Activated T-helper 1 cell treated with anti-CD3 and anti-CD28 coated beads, Interleukin-12 subunit alpha, Interleukin-12 subunit beta, Interleukin-2, Interleukin-4 antibody, amounts not matched to agents 30 ng/mL and 10 ng/mL and 1 ng/mL, durations not matched to agents 14 hours and 24 hours and 36 hours (primary cell): ENCODE measurements at regions of chr13 and their contacts with region 1.

Region 1: GRCh38 chr13:43797869-43798268 is 11.1 kb upstream of the ENOX1 start:
- DNase-seq: no peak
- H3K4me3 Mint-ChIP-seq: no peak overlapping the region
- H3K27ac Mint-ChIP-seq: no peak overlapping the region
- H3K4me1 Mint-ChIP-seq: peaks cover 14% of the 10 kb centered on the region
- H3K27me3 Mint-ChIP-seq: peaks cover 12% of the 10 kb centered on the region

Region 2: DNA sequence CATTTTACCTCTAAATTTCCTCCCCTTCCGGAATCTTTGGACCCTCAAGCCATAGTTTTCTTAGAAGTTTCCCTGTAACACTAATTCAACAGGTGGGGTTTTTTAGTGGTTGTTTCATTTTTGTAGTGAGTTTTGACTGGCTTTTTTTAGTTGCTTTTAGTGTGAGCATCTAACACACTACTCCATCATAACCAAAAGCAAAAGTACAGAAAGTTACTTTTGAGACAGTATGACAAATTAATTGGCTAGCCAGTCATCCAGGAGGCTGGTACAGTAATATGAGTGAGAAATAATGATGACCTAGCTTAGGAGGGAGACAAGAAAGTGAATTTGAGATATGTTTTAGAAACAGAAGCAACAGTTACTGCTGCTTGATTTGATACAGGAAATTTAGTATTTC is 703.0 kb before region 1 on chr13:
- intact Hi-C with region 1: loop called (anchors 2 kb)
- DNase-seq: no peak
- H3K4me3 Mint-ChIP-seq: no peak overlapping the region
- H3K27ac Mint-ChIP-seq: peak overlapping the region; percentile 37
- H3K4me1 Mint-ChIP-seq: peaks cover 15% of the 10 kb centered on the region
- H3K27me3 Mint-ChIP-seq: no peaks in the 10 kb centered on the region

Region 3: DNA sequence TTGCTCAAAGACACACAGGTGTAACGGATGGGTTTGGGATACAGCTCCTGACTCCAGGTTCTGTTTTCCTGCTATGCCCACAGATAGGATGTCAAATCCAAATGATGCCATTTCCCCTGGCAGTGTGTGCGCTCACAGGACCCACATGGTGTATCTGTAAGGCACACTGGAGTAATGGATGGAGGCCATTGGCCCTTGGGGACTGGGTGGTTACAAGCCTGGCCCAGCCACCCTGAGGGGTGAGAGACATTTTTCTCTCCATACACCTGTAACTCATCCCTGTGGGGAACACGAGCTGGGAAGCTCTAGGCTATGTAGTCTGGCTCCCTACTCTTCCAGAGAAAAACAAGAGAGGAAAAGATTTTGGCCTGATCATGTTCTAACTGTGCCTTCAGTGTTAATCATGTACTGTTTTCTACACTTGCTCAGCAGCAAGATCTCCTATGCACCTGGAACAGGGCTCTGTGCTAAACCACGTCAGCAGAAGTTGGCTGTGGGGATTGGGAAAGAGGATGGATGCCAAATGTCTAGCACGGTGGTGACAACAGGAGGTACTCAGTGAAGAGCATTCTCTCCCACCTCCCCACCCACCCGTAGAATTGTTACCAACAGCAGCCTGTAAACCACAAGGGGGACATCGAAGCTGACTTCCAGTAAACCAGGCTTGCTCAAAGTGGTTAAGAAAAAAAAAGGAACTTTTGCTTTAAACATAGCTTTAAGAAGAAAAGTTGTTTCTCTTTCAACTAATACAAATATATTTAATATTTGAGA is 318.9 kb after region 1 on chr13:
- intact Hi-C with region 1: no loop called
- DNase-seq: no peak
- H3K4me3 Mint-ChIP-seq: no peak overlapping the region
- H3K27ac Mint-ChIP-seq: no peak overlapping the region
- H3K4me1 Mint-ChIP-seq: peaks cover 13% of the 10 kb centered on the region
- H3K27me3 Mint-ChIP-seq: no peaks in the 10 kb centered on the region

Region 4: GRCh38 chr13:44734201-44734707 is 936.4 kb after region 1 on chr13:
- intact Hi-C with region 1: no loop called
- DNase-seq: no peak
- H3K4me3 Mint-ChIP-seq: no peak overlapping the region
- H3K27ac Mint-ChIP-seq: no peak overlapping the region
- H3K4me1 Mint-ChIP-seq: no peaks in the 10 kb centered on the region
- H3K27me3 Mint-ChIP-seq: peaks cover 9% of the 10 kb centered on the region